ENCODE measurements at regions of chr20 and their contacts with region 1.

Region 1: DNA sequence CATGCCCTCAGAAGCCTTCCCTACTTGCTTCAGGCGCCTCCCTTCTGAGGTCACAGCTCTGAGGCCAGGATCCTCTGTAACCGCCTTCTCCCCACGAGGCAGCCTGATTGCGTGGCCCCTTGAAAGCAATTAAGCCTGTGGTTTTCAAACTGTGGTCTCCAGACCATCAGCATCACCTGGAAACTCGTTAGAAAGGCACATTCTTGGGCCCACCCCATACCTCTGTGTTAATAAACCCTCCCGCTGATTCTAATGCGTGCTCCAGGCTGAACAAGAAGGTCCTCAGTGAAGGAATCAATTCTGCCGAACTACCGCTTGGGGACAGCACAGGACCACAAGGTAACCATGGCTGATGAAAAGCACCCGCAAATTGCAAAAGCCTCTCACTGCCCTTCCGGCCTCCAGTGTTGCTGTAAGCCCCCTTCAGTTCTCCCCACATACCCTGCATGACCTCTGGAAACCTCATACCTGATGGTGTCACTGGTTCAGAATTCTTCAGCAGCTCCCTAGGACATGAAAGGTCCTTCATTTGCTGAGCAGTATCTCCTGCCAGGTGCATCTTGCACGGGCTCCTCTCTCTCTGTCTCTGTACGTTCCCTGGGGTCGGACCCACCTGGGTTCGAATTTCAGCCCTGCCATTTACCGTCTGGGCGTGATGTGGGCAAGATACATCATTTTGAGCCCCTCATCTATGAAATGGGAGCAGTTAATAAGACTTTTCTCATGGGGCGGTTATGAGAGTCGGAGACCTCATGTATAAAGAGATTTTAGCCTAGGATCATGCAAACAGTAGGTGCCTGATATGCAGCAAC is 93.3 kb upstream of the RNF24 start:
- DNase-seq: peak; percentile 54 to 63
- ATAC-seq: peak; percentile 84

Region 2: DNA sequence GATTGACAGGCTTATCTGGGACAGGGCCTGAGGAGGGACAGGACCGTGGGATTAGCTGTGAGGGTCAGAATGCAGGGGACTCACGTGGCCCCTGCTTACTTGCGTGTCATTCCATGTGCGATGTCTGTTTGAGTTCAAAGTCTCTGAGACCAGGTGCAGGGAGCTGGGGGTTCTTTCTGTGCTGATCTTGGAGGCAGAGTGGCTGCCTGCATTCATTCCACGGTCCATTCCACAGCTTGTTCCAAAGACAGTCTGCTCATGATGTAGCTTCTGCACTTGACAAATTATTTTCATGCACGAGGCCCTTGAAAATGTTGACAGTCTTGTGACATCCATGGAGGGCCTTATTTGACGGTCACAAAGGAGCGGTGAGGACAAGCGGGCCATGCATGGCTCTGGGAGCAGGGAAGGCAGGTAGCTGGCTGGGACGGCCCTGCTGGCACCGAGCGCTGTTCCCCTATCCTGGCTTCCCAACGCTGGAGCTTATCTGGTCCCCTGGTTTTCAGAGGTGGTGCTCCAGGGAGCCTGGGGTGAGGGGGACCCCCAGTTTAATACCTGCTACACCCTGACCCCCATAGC is 62.9 kb after region 1 on chr20:
- intact Hi-C with region 1: loop called in 1 of 2 experiments (anchors 2 kb)
- DNase-seq: no peak
- ATAC-seq: peak; percentile 38

Region 3: DNA sequence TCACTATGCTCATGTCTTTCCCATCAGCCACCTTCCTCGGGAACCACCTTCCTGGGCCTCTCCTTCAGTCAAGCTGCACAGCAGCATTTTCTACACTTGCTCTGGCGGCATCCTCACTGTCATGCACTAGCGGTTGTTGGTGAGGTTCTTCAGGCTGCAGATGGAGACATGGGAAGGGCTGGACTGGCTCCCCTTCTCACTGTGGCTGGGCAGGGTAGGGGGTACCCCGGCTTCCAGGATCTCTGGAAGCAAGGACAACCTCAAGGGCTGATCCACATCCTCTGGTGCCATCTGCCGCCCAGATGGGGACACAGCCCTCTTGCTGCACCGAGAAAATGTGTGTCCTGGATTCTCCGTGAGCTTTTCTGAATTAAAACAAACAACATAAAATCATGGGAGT is 86.8 kb after region 1 on chr20:
- intact Hi-C with region 1: no loop called
- DNase-seq: no peak
- ATAC-seq: peak; percentile 72

Measured in left colon (tissue), 2 donors.